Caco-2 (cell line): ENCODE measurements at regions of chr17 and their contacts with region 1.

Region 1: DNA sequence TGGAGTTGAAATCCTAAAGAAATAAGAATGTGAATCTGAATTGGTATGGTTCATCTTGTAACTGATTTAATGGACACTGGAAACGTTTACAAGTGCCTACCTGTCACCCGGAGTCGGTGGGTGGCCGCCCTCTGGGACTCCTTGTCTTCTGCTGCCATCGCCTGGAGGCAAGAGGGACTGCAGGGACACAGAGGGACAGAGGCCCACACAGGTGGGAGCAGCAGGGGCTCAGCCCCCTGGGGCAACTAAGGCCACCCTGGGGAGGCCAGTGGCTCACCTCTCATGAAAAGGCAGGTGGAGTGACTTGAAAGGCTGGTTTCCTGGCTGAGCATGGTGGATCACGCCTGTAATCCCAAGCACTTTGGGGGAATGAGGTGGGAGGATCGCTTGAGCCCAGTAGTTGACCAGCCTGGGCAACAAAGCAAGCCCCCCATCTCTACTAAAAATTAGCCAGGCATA is 23.2 kb downstream of the TMEM92 start:
- DNase-seq: peak; percentile 95 to 98
- H3K4me3 ChIP-seq: no peak overlapping the region
- H3K4me3 Mint-ChIP-seq: no peak overlapping the region
- H3K27ac Mint-ChIP-seq: peak overlapping the region; percentile 13
- H3K4me1 ChIP-seq: peaks cover 5% of the 10 kb centered on the region; the same call in 1 of the 2 replicates
- H3K4me1 Mint-ChIP-seq: peaks cover 10% of the 10 kb centered on the region
- H3K27me3 ChIP-seq: no peaks in the 10 kb centered on the region
- H3K27me3 Mint-ChIP-seq: no peaks in the 10 kb centered on the region
- CTCF ChIP-seq: peak; percentile 100

Region 2: DNA sequence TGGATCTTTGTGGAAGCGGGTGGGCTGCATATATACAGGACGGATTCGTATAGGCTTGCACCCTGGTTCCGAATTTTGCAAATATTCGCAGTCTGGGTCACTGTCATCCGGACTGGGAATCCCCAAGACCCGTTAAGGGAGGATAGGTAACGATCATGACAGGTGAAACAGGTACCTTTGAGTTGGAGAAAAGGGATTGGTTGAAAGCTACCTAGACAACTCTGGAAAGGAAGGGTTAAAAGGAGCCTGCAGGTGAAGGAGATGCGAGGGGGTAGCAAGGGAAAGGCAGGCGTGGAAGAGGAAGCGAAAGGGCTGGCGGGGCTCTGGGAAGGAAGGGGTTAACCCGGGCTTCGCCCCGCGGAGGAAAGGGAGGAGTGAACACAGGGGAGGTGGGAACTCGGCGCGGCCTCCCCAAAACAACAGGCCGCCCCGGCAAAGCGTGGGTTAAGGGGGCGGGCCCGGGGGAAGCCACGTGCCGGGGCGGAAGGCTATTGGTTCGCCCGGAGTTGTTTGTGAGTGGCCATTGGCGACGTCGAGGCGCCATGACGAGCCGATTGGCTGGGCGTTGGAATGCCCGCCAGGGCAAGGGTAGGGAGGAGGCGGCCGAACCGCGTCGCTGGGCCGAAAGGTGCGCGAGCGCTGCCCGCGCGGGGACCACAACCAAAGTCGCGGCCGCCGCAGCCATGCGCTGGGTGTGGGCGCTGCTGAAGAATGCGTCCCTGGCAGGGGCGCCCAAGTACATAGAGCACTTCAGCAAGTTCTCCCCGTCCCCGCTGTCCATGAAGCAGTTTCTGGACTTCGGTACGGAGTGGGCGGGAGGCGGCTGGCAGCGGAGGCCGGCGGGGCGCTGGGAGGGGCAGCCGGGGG is 202.4 kb before region 1 on chr17 and contains the start of gene PDK2:
- CTCF ChIA-PET with region 1: no interaction called
- POLR2A ChIA-PET with region 1: no interaction called
- intact Hi-C with region 1: loop called (anchors 5 kb)
- DNase-seq: peak; percentile 91
- H3K4me3 ChIP-seq: peak within 1 kb of the TSS; percentile 72
- H3K4me3 Mint-ChIP-seq: peak within 1 kb of the TSS; percentile 95
- H3K27ac Mint-ChIP-seq: peak within 1 kb of the TSS; percentile 84
- H3K4me1 ChIP-seq: no peaks in the 10 kb centered on the region
- H3K4me1 Mint-ChIP-seq: no peaks in the 10 kb centered on the region
- H3K27me3 ChIP-seq: no peaks in the 10 kb centered on the region
- H3K27me3 Mint-ChIP-seq: no peaks in the 10 kb centered on the region
- CTCF ChIP-seq: no peak
- total RNA-seq, gene PDK2: 10.5 and 15.2 TPM in 2 replicates

Region 3: GRCh38 chr17:50169121-50169764 is 128.2 kb before region 1 on chr17:
- CTCF ChIA-PET with region 1: interaction called, 45 read pairs
- POLR2A ChIA-PET with region 1: no interaction called
- intact Hi-C with region 1: loop called (anchors 1 kb)
- DNase-seq: peak; percentile 88
- H3K4me3 ChIP-seq: no peak overlapping the region
- H3K4me3 Mint-ChIP-seq: no peak overlapping the region
- H3K27ac Mint-ChIP-seq: no peak overlapping the region
- H3K4me1 ChIP-seq: peaks cover 3% of the 10 kb centered on the region; the same call in 1 of the 2 replicates
- H3K4me1 Mint-ChIP-seq: peaks cover 7% of the 10 kb centered on the region
- H3K27me3 ChIP-seq: no peaks in the 10 kb centered on the region
- H3K27me3 Mint-ChIP-seq: no peaks in the 10 kb centered on the region
- CTCF ChIP-seq: peak; percentile 98 to 100

Region 4: DNA sequence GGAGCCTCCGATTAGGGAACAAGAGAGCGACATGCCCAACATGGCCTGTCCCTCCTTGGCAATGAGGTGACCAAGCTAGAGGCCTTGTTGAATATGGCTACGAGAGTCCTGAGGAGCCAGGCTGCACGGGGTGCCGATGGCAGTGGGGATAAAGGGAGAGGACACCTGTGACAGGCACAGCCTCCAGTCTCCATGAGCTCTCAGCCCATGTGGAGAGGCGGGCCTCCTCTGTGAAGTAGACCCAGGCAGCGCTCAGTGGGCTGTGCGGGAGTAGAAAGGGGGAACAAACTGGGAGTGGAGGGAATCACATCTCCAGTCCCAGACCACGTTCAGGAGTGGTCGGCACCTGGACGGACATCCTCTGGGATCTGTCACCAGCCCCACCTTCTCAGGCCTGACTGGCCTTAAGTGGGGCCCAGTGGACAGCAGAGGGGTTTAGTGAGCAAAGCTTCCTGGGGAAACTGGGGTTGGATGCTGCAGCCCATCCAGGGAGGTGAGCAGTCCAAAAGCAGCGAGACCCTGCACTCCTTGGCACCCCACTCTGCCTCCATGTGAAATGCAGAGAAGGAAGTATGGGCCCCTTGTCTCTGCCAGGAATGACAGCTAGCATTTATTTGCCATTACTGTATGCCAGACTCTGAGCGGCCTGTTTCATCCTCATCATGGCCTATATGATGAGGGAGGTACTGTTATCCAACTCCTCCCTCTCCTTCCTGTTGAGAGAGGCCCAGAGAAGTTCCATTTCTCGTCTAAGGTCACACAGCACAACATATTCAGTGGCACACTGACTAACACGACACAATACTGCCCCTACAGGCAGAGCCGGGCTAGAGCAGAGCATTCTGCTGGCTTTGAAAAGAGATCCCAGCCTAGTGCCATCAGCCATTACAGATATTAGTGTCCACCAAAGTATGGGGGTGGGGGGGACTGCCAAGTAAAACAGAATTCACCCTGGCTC is 27.7 kb before region 1 on chr17:
- CTCF ChIA-PET with region 1: interaction called, 15 read pairs
- POLR2A ChIA-PET with region 1: no interaction called
- intact Hi-C with region 1: loop called (anchors 1 kb)
- DNase-seq: peak; percentile 80 to 86
- H3K4me3 ChIP-seq: no peak overlapping the region
- H3K4me3 Mint-ChIP-seq: no peak overlapping the region
- H3K27ac Mint-ChIP-seq: no peak overlapping the region
- H3K4me1 ChIP-seq: peaks cover 22% of the 10 kb centered on the region
- H3K4me1 Mint-ChIP-seq: peaks cover 14% of the 10 kb centered on the region
- H3K27me3 ChIP-seq: no peaks in the 10 kb centered on the region
- H3K27me3 Mint-ChIP-seq: no peaks in the 10 kb centered on the region
- CTCF ChIP-seq: peak; percentile 92 to 98

Region 5: DNA sequence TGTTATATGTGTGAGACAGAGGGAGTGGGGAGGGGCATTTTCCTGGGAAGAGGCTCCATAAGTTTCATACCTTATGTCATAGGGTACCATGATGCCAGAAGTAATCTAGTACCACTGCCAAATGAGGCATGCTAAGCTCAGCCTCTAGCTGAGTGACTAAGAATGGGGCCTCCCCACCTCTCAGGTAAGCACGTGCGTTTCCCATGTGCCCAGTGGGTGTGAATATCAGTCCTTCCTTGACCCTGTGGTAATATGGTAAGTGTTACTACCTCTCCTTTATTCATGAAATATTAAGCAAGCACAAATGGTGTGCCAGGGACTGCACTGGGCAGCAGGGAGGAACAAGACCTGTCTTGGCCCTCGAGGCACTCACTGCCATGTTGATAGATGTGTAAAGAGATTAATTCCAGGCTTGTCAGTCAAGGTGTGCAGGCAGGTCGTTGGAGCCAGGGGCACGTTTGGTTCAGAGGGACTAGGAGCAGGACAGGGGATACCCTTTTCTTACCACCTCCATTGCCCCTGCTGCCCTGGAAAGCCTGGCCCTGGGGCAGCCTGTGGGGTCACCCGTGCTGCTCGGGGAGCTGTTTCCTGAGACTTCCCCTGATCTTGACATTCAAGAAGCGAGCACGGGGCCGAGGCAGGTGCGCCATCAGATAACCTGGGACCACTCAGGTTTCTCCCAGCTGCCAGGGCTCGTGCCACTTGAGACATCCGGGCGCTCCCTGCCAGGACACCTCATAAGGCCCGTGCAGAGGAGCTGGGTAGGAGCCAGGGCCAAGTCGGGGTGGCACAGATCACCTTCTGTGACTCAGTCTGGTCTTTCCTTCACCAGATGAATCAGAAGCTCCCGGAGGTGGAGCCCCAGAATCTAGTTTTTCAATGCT is 190.0 kb after region 1 on chr17:
- CTCF ChIA-PET with region 1: no interaction called
- POLR2A ChIA-PET with region 1: no interaction called
- intact Hi-C with region 1: no loop called
- DNase-seq: no peak
- H3K4me3 ChIP-seq: no peak overlapping the region
- H3K4me3 Mint-ChIP-seq: no peak overlapping the region
- H3K27ac Mint-ChIP-seq: no peak overlapping the region
- H3K4me1 ChIP-seq: no peaks in the 10 kb centered on the region; the same call in 1 of the 2 replicates
- H3K4me1 Mint-ChIP-seq: peaks cover 6% of the 10 kb centered on the region
- H3K27me3 ChIP-seq: no peaks in the 10 kb centered on the region
- H3K27me3 Mint-ChIP-seq: no peaks in the 10 kb centered on the region
- CTCF ChIP-seq: no peak

Region 6: DNA sequence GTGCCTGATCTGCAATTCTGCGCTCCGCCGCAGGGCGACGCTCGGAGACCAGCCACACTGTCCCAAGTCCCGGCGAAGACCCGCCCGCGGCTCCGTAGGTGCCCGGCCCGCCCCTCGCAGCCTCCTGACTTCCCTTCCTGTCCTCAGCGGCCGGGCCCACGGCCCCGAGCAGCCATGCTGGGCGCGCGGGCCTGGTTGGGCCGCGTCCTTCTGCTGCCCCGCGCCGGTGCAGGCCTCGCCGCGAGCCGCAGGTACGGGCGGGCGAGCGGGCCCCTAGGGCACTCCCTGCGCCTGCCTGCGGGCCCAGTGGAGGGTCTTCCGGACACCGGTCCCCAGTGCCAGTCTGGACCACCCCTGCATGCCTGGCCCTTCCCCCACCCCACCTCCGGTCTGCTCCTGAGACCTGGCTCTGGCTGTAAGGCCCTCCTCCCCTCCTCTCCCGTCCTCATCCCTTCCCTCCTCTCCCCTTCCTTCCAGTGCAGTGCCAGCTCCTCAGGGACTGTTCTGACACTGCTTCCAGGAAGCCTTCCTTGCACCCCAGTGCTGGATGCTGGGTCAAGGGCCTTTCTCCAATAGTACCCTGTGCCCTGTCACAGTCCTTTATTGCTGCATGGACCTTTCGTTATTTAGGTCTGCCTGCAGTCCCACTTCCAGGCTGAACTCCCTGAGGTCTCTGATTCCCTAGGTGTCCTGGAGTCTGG is 249.7 kb after region 1 on chr17 and contains the start of gene SPATA20:
- CTCF ChIA-PET with region 1: no interaction called
- POLR2A ChIA-PET with region 1: no interaction called
- intact Hi-C with region 1: no loop called
- DNase-seq: peak; percentile 99
- H3K4me3 ChIP-seq: peak within 1 kb of the TSS; percentile 57
- H3K4me3 Mint-ChIP-seq: peak within 1 kb of the TSS; percentile 80
- H3K27ac Mint-ChIP-seq: peak within 1 kb of the TSS; percentile 72
- H3K4me1 ChIP-seq: peaks cover 38% of the 10 kb centered on the region
- H3K4me1 Mint-ChIP-seq: peaks cover 43% of the 10 kb centered on the region
- H3K27me3 ChIP-seq: no peaks in the 10 kb centered on the region
- H3K27me3 Mint-ChIP-seq: no peaks in the 10 kb centered on the region
- CTCF ChIP-seq: peak; percentile 100
- total RNA-seq, gene SPATA20: 149 and 176 TPM in 2 replicates